ENCODE measurements at regions of chr18 and their contacts with region 1.

Region 1: GRCh38 chr18:2714140-2714539 is 58.6 kb downstream of the SMCHD1 start:
- DNase-seq: peak in 1 of 14 experiments; percentile 35
- ATAC-seq: no peak
- H3K4me3 ChIP-seq: no peak overlapping the region
- H3K4me3 Mint-ChIP-seq: no peak overlapping the region
- H3K27ac ChIP-seq: no peak overlapping the region
- H3K27ac Mint-ChIP-seq: peak overlapping the region; percentile 24
- H3K4me1 ChIP-seq: peaks cover 9% of the 10 kb centered on the region
- H3K4me1 Mint-ChIP-seq: peaks cover 71% of the 10 kb centered on the region
- H3K27me3 ChIP-seq: no peaks in the 10 kb centered on the region
- H3K27me3 Mint-ChIP-seq: no peaks in the 10 kb centered on the region
- CTCF ChIP-seq: no peak

Region 2: DNA sequence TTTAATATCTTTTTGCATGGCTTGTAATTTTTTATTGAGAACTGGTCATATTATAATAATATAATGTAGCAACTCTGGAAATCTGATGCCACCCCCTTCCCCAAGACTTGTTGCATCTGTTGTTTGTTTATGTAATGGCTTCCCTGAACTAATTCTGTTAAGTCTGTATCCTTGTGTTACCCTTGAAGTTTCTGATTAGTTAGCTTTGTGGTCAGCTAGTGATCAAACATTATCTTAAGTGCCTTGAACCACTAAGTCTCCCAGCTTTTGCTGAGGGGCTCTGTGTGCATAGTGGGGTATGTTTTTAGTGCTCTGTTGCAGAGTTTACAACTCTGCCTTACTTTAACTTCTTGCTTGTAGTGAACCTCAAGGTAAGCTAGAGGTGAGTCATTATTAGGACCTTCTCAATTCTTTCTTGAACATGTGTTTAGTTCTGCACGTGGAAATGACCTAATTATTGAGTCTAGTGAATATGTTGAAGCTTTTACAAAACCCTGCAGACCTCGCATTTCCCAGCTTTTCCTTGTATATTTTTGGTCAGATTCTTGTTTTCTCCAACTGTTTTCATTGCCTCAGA is 33.8 kb before region 1 on chr18:
- CTCF ChIA-PET with region 1: no interaction called
- POLR2A ChIA-PET with region 1: no interaction called
- intact Hi-C with region 1: loop called in 1 of 2 experiments (anchors 5 kb)
- DNase-seq: no peak
- ATAC-seq: peak; percentile 19
- H3K4me3 ChIP-seq: no peak overlapping the region
- H3K4me3 Mint-ChIP-seq: peak overlapping the region; percentile 2
- H3K27ac ChIP-seq: peak overlapping the region in 1 of 2 donors; percentile 13
- H3K27ac Mint-ChIP-seq: peak overlapping the region; percentile 40
- H3K4me1 ChIP-seq: peaks cover 15% of the 10 kb centered on the region
- H3K4me1 Mint-ChIP-seq: peaks cover 81% of the 10 kb centered on the region
- H3K27me3 ChIP-seq: no peaks in the 10 kb centered on the region
- H3K27me3 Mint-ChIP-seq: no peaks in the 10 kb centered on the region
- CTCF ChIP-seq: no peak

Region 3: DNA sequence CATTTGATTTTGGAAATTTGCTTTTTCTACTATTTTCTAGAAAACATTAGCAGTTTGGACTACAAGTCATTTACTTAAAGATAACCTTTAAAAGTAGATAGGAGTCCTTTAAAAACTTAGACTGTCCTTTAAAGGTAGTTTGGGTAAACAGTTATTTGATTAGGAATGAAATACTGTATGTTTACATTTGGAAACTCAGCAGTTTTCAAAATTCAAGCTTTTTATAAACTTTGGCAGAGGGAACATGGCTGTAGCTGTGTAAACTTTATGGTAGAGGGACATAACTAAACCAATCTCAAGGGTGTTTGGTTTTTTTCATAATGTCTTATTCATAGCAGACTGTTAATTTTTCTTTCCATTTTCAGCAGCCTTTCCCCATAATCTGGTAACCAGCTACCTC is 32.1 kb after region 1 on chr18:
- CTCF ChIA-PET with region 1: no interaction called
- POLR2A ChIA-PET with region 1: interaction called, 3 read pairs
- intact Hi-C with region 1: loop called (anchors 5 kb)
- DNase-seq: no peak
- ATAC-seq: no peak
- H3K4me3 ChIP-seq: no peak overlapping the region
- H3K4me3 Mint-ChIP-seq: no peak overlapping the region
- H3K27ac ChIP-seq: no peak overlapping the region
- H3K27ac Mint-ChIP-seq: peak overlapping the region; percentile 79
- H3K4me1 ChIP-seq: no peaks in the 10 kb centered on the region
- H3K4me1 Mint-ChIP-seq: peaks cover 45% of the 10 kb centered on the region
- H3K27me3 ChIP-seq: no peaks in the 10 kb centered on the region
- H3K27me3 Mint-ChIP-seq: no peaks in the 10 kb centered on the region
- CTCF ChIP-seq: no peak